Activated CD8-positive, alpha-beta memory T cell treated with anti-CD3 and anti-CD28 coated beads, Interleukin-2, amount 10 ng/mL, durations not matched to agents 7 days and 5 days (primary cell): ENCODE measurements at regions of chr1 and their contacts with region 1.

Region 1: DNA sequence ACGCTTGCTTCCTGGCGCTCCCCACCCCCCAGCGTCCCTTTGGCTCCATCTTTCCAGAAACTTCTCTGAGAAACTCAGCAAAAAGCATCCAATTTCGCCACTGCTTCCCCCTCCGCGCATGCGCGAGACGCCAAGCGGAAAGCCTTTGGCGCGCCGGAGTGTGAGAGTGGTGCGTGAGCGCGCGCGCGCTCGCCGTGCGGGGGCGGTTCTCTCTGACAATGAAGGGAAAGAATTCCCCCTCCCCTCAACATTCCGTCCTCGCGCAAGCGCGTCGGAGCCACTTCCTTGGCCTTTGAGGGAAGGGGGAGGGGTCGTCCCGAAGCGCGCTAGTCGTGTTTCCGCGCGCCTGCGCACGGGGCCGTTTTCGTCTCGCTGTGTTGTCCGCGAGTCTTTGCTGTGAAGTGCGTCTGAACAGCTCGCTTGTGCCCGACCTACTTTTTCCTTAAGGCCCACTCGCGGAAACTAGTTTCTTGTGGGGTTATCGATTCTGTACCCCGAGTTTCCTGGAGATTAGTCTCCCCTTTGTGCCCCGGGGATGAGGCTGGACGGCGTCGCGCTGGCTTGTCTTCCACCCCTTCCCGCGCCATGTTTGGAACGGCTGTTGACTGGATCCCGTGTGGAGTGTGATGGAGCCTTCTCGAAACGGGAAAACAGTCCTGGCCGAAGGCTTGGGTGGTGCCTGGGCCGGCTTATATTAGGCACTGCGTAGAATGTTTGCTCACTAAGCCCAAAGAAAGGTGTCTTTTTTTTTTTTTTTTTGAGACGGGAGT is 11.6 kb upstream of the SPEN start:
- DNase-seq: peak; percentile 99
- ATAC-seq: peak; percentile 64
- H3K4me3 Mint-ChIP-seq: peak overlapping the region; percentile 84
- H3K27ac Mint-ChIP-seq: peak overlapping the region; percentile 95
- H3K4me1 Mint-ChIP-seq: peaks cover 25% of the 10 kb centered on the region
- H3K27me3 Mint-ChIP-seq: no peaks in the 10 kb centered on the region

Region 2: DNA sequence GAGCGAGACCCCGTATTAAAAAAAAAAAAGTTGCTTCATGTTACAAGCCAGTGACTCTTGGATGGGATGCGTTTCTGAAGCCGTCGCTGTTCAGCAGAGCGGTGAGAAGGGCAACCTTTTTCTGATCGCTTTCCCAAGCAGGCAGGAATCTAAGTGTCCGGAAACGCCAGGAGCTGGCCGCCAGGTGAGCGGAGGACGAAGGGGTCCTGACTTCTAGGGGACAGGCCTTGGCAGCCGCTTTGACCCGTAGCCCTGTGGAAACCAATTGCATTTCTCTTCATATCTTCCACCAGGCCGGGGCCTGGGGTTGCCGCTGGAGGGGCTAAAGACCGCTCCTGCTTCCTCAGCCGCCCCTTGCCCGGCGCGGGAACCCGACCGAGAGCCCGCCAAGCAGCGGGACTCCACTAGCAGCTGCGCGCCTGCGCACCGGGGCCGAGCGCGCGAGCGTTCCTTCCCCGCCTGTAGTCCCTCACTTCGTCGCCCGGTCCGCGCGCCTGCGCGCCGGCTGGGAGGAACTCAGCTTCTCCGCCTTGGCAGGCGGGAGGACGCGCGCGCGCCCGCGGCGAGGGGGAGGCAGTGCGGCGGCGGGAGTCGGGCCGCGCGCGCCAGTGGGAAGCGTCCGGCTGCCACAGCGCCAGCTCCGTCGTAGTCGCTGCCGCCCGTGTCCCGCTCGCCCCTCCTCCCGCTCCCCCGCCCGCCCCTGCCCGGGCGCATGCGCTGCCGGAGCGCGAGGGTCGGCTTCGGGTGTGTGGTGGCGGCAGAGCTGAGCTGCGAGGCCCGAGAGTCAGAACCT is 11.4 kb after region 1 on chr1 and contains the start of gene SPEN:
- CTCF ChIA-PET with region 1: interaction called, 45 read pairs
- DNase-seq: peak; percentile 98
- ATAC-seq: peak; percentile 89
- H3K4me3 Mint-ChIP-seq: peak within 1 kb of the TSS; percentile 98
- H3K27ac Mint-ChIP-seq: peak within 1 kb of the TSS; percentile 99
- H3K4me1 Mint-ChIP-seq: peaks cover 42% of the 10 kb centered on the region
- H3K27me3 Mint-ChIP-seq: no peaks in the 10 kb centered on the region
- total RNA-seq, gene SPEN: 74.6 to 75.5 TPM